ENCODE measurements at regions of chr3 and their contacts with region 1.

Region 1: DNA sequence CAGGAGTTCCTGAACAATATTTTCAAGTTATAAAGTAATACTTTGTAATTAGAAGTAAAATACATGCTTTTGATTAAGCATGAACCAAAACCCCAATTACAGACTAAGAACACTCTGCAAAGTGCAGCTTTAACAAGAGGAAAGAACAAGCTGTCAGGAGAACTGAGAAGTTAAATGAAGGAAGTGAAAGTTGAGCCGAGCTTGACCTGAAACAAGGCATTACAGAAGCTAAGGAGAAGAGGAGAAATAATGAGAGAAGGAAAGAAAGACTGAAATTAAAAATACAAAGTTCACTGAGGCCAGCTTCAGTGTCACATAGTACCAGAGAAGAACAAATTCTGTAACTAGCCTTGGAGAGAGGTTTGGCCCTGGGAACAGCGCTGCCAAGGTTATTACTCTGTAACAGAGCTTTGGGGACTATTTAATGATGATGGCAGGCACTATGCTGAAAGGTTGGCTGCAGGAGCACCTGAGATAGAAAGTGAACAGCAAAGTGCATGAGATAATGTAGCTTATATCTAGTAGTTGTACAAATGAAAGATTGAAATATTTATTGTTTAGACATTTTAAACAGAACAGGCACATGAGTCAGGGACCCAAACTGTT is 241.9 kb upstream of the PEX5L start:
- DNase-seq: peak; percentile 63
- ATAC-seq: peak; percentile 95
- H3K4me3 ChIP-seq: no peak overlapping the region
- H3K27ac ChIP-seq: peak overlapping the region; percentile 29; the same call in 1 of the 2 replicates
- H3K4me1 ChIP-seq: peaks cover 17% of the 10 kb centered on the region
- H3K27me3 ChIP-seq: no peaks in the 10 kb centered on the region
- CTCF ChIP-seq: no peak
- EP300 ChIP-seq: peak; percentile 53 to 89
- POLR2A ChIP-seq: no peak
- RAD21 ChIP-seq: no peak

Region 2: DNA sequence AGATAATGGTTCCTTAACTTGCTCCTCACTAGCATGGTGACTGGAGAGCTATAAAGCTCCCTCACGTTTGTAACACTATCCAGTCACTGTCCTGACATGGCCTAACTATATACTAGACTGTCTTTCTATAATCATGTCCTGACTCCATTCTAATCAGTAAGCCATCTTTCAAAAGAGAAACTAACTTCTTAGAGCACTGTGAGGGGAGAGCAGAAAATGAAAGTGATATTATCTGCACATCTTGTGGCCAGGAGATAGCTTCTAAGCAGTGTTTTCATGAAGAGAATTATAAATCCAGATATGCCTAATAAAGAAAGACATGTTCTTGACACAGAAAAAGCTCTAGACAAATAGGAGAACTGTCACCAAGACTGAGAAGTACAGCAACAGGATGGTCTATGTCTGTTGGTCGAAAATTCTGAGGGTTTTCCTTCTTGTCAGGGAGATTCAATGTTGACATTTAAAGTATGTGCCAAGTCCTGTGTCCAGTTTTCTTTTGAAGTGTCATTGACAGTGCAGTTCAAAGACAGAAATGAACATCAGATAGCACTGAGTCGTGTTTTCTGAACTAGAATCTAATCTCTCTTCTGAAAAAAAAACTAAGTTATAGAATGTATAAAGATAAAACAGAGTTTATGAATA is 11.4 kb before region 1 on chr3:
- CTCF ChIA-PET with region 1: interaction called, 11 read pairs
- POLR2A ChIA-PET with region 1: interaction called, 27 read pairs
- RAD21 ChIA-PET with region 1: interaction called, 20 read pairs
- SMC1A ChIA-PET with region 1: interaction called, 17 read pairs
- in situ Hi-C with region 1: no loop called
- intact Hi-C with region 1: no loop called
- DNase-seq: peak; percentile 69
- ATAC-seq: peak; percentile 99
- H3K4me3 ChIP-seq: peak overlapping the region; percentile 20; the same call in 1 of the 2 replicates
- H3K27ac ChIP-seq: peak overlapping the region; percentile 54
- H3K4me1 ChIP-seq: peaks cover 10% of the 10 kb centered on the region; the same call in 1 of the 2 replicates
- H3K27me3 ChIP-seq: no peaks in the 10 kb centered on the region
- CTCF ChIP-seq: no peak
- EP300 ChIP-seq: no peak
- POLR2A ChIP-seq: no peak
- RAD21 ChIP-seq: no peak

Region 3: GRCh38 chr3:180329187-180329586 is 50.5 kb after region 1 on chr3:
- CTCF ChIA-PET with region 1: no interaction called
- POLR2A ChIA-PET with region 1: interaction called, 3 read pairs
- RAD21 ChIA-PET with region 1: interaction called, 18 read pairs
- SMC1A ChIA-PET with region 1: interaction called, 12 read pairs
- in situ Hi-C with region 1: no loop called
- intact Hi-C with region 1: loop called (anchors 2 kb)
- DNase-seq: peak; percentile 43
- ATAC-seq: peak; percentile 88
- H3K4me3 ChIP-seq: no peak overlapping the region
- H3K27ac ChIP-seq: peak overlapping the region; percentile 56
- H3K4me1 ChIP-seq: peaks cover 32% of the 10 kb centered on the region
- H3K27me3 ChIP-seq: no peaks in the 10 kb centered on the region
- CTCF ChIP-seq: peak; percentile 26 to 32 (median 29); a peak in 2 of 6 replicates
- EP300 ChIP-seq: peak in 1 of 2 experiments; percentile 21; a peak in 1 of 4 replicates
- POLR2A ChIP-seq: no peak
- RAD21 ChIP-seq: peak; percentile 55